ENCODE measurements at regions of chr6 and their contacts with region 1.

Region 1: GRCh38 chr6:26537846-26538571 is at the start of gene HMGN4:
- DNase-seq: peak; percentile 58 to 88 (median 80)
- H3K4me3 ChIP-seq: peak within 1 kb of the TSS; percentile 73 to 99 (median 90)
- H3K27ac ChIP-seq: peak within 1 kb of the TSS; percentile 85 to 100 (median 97)
- H3K27me3 ChIP-seq: no peaks in the 10 kb centered on the region
- CTCF ChIP-seq: peak in 37 of 56 donors; percentile 12 to 47 (median 25)
- total RNA-seq, gene HMGN4: 16.9 to 48.3 (median 28.5) TPM

Region 2: DNA sequence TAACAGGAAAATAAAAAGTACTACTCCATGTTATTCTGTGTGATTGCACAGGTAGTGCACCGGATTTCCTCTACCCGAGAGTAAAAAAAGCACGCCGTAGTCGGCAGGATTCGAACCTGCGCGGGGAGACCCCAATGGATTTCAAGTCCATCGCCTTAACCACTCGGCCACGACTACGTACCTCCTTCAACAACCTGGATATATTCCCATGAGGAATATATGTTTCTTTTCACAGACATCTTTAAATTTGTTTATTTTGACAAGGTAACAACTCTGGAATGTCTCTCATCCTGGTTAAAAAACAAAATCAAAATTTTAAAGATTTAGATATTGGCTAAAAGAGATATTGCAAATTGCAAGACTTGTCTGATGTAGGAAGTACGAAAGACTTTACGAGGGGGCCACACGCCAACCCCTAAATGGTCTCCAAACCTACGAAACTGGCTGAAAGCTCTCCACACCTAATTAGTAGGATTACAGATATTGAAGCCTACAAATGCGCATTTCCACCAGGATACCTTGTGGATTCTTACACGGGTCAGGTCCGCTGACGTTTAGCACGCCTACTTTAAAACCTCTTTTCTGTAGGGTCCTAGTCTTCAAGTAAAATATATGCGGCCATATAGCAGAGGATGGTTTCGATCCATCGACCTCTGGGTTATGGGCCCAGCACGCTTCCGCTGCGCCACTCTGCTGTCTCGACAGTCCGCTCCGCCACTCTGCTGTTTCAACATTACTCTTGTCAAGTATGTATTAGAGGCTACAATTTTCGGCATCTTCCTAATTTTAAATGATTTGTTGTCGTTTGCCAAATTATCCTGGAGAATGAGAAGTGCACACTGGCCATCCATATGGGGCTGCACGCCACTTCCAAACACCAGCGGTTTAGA is 225.3 kb before region 1 on chr6:
- intact Hi-C with region 1: loop called (anchors 5 to 10 kb)
- DNase-seq: peak; percentile 57 to 86 (median 78)
- H3K4me3 ChIP-seq: peak overlapping the region; percentile 38 to 73 (median 60)
- H3K27ac ChIP-seq: peak overlapping the region in 54 of 59 donors; percentile 15 to 83 (median 68)
- H3K27me3 ChIP-seq: peaks cover 0 to 8% (median 0%) of the 10 kb centered on the region in 45 donors
- CTCF ChIP-seq: peak in 5 of 56 donors; percentile 6 to 24 (median 22)

Region 3: DNA sequence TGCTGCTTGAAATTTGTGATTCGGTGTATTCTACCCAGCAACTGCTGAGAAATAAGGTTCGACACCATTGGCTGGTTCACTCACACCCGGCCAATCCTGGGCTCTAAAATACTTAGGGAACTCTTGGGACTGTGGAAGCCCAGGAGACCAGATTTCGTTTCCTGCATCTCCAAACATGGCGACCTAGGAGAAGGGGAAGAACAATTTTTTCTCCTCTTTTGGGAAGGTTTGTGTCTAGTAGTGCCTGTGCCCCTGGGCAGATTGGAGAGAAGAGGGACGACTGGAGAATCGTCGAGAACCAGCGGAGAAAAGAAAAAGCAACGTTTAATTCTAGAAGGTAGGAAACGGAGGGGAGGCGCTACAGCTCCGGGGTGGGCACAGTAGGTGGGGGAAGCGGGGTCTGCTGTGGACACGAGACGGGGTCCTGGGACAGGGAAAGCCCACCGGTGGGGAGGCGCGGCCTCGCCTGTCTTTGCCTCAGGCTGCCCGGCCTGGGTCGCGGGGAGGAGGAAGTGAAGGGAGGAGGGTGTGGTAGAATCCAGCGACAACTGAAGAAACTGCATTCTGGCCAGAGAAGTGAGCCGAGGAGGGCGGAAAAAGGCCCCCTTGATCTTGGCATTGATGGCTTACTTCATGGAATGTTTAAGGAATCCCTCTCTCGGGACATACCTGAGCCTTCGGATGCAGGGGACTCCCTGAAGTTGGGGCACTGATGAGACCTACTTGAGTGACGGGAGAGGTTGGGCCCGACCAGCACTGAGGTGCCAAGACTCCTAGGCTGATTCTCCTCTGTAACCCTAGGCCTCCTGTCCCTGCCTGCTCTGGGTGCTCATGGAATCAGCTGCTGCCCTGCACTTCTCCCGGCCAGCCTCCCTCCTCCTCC is 80.0 kb before region 1 on chr6 and contains the start of gene BTN2A1:
- intact Hi-C with region 1: loop called (anchors 5 to 10 kb)
- DNase-seq: peak; percentile 51 to 94 (median 84)
- H3K4me3 ChIP-seq: peak within 1 kb of the TSS; percentile 44 to 95 (median 82)
- H3K27ac ChIP-seq: peak within 1 kb of the TSS; percentile 12 to 97 (median 89)
- H3K27me3 ChIP-seq: no peaks in the 10 kb centered on the region
- CTCF ChIP-seq: peak in 17 of 56 donors; percentile 5 to 39 (median 23)
- total RNA-seq, gene BTN2A1: 16.0 to 33.4 (median 24.3) TPM

Region 4: GRCh38 chr6:26520853-26521599 is 17.0 kb before region 1 on chr6:
- intact Hi-C with region 1: loop called in 1 of 2 experiments (anchors 1 kb)
- DNase-seq: peak; percentile 64 to 83 (median 80)
- H3K4me3 ChIP-seq: peak overlapping the region; percentile 45 to 78 (median 68)
- H3K27ac ChIP-seq: peak overlapping the region; percentile 58 to 96 (median 90)
- H3K27me3 ChIP-seq: no peaks in the 10 kb centered on the region
- CTCF ChIP-seq: peak in 4 of 56 donors; percentile 0 to 6 (median 5)

Region 5: DNA sequence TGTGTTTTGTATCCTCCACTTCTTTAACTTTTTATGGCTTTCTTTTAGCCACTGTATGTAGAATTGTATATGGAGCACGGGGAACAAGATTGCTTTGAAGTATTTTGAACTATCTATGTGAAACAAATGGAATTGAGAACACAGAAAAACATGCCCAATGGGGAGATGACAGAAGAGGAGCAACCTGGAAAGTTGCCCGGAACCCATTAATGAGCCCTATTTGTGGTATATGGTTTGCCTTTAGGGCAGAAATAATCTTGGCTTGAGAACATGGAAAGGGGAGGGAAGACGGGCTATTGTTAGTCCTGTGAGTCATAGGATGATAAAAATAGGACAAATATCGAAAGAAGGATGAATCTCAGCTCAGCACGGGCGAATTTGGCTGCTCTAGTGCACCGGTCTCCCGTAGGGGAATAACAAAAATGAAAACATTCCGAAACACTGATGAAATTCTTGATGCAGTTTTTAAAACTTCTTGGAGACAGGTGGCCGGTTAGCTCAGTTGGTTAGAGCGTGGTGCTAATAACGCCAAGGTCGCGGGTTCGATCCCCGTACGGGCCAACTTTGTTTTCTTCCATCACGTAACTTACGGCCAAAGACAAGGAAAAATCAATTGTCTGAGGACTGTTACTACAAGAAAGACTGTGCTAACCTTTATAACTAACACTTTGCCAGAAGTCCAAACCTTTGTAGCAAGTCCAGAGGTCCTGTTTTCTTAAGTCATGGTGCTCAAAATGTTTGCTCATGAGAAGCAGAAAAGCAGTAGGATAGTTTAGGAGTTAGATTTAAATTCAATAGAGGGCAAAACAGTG is 15.8 kb after region 1 on chr6:
- intact Hi-C with region 1: loop called (anchors 2 kb)
- DNase-seq: peak in 9 of 10 donors; percentile 37 to 83 (median 64)
- H3K4me3 ChIP-seq: peak overlapping the region; percentile 48 to 82 (median 66)
- H3K27ac ChIP-seq: peak overlapping the region; percentile 0 to 97 (median 83)
- H3K27me3 ChIP-seq: no peaks in the 10 kb centered on the region
- CTCF ChIP-seq: peak in 2 of 56 donors; percentile 0 to 6

Region 6: DNA sequence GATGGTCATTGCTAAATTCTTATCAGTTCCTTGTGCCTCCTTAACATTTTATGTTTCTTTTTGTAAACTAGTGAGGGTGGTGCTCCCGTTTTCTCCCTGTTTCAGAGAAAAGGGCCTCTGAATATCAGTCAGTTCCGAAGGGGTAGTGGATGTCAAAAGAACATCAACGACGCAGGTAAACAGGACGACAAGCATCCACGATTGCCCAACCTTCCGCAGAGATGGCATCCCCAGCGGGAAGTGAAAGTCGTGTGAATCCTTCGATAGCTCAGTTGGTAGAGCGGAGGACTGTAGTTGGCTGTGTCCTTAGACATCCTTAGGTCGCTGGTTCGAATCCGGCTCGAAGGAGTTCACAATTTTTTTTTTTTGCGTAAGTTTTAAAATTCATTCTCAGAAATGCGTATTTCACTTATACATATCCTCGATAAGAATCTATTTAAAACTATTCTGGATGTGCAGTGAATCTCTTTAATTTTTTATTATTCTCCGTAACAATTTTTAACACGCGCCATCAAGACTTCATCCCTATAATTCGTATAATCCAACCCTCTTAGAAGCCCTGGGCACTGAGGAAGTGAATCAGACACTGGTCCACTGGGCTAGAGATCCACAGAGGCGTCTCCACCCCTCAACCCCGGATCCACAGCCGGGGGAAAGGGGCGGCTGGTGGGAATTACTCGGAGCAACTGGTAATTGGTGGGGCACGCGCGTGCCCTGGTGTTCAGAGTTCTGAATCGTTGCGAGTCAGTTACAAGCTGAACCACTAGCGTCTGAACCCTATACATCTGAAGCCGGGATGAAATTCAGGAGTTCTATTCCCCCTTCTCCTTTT is 30.8 kb after region 1 on chr6:
- intact Hi-C with region 1: loop called in 1 of 2 experiments (anchors 1 kb)
- DNase-seq: peak; percentile 89 to 97 (median 94)
- H3K4me3 ChIP-seq: peak overlapping the region; percentile 42 to 87 (median 68)
- H3K27ac ChIP-seq: peak overlapping the region; percentile 52 to 97 (median 90)
- H3K27me3 ChIP-seq: no peaks in the 10 kb centered on the region
- CTCF ChIP-seq: peak in 13 of 56 donors; percentile 6 to 29 (median 13)

Measured in dorsolateral prefrontal cortex (tissue), 120 donors.